PC-9 (cell line): ENCODE measurements at regions of chr2 and their contacts with region 1.

Region 1: GRCh38 chr2:120662746-120663145 is 72.9 kb upstream of the GLI2 start:
- DNase-seq: no peak
- H3K4me3 ChIP-seq: no peak overlapping the region
- H3K27ac ChIP-seq: no peak overlapping the region
- H3K4me1 ChIP-seq: no peaks in the 10 kb centered on the region
- H3K27me3 ChIP-seq: 0 out of 2 replicates have a peak, but pooled peaks cover 4% of the 10 kb centered on the region
- CTCF ChIP-seq: no peak

Region 2: GRCh38 chr2:119873350-119874315 is 789.1 kb before region 1 on chr2:
- CTCF ChIA-PET with region 1: no interaction called
- POLR2A ChIA-PET with region 1: no interaction called
- intact Hi-C with region 1: no loop called
- DNase-seq: no peak
- H3K4me3 ChIP-seq: no peak overlapping the region
- H3K27ac ChIP-seq: no peak overlapping the region
- H3K4me1 ChIP-seq: no peaks in the 10 kb centered on the region
- H3K27me3 ChIP-seq: no peaks in the 10 kb centered on the region
- CTCF ChIP-seq: no peak

Region 3: GRCh38 chr2:120367649-120368048 is 295.1 kb before region 1 on chr2:
- CTCF ChIA-PET with region 1: no interaction called
- POLR2A ChIA-PET with region 1: no interaction called
- intact Hi-C with region 1: no loop called
- DNase-seq: peak; percentile 55 to 80
- H3K4me3 ChIP-seq: no peak overlapping the region
- H3K27ac ChIP-seq: 0 out of 2 replicates have a peak overlapping the region, but pooled peaks have one; percentile 1
- H3K4me1 ChIP-seq: peaks cover 20% of the 10 kb centered on the region
- H3K27me3 ChIP-seq: no peaks in the 10 kb centered on the region
- CTCF ChIP-seq: no peak

Region 4: DNA sequence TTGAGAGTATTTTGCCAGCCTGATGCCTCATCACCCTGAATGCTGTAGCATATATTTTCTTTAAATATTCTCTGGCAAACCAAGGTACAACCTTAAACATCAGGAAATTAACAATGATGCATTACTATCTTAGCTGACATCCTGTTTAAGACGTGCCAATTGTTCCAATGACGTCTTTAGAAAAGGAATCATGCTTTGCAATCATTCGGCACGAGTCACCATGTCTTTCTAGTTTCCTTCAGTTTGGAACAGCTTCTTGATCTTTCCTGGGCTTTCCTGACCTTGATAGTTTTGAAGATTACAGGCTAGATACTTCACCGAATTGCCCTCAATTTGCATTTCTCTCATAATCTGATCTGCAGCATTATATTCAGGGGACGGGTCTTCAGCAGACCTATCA is 15.3 kb before region 1 on chr2:
- CTCF ChIA-PET with region 1: no interaction called
- POLR2A ChIA-PET with region 1: no interaction called
- intact Hi-C with region 1: loop called (anchors 1 kb)
- DNase-seq: peak in 1 of 2 experiments; percentile 49
- H3K4me3 ChIP-seq: no peak overlapping the region
- H3K27ac ChIP-seq: no peak overlapping the region
- H3K4me1 ChIP-seq: no peaks in the 10 kb centered on the region
- H3K27me3 ChIP-seq: no peaks in the 10 kb centered on the region
- CTCF ChIP-seq: no peak